Sciatic nerve (tissue), 2 donors: ENCODE measurements at regions of chr20 and their contacts with region 1.

Region 1: GRCh38 chr20:3407771-3408637 is 535 bp upstream of the DNAAF9 start:
- DNase-seq: peak; percentile 84
- ATAC-seq: peak; percentile 86

Region 2: GRCh38 chr20:3470627-3471396 is 62.8 kb after region 1 on chr20 and contains the start of gene ATRN:
- intact Hi-C with region 1: loop called (anchors 2 kb)
- DNase-seq: peak; percentile 95
- ATAC-seq: peak; percentile 97
- total RNA-seq, gene ATRN: 31.5 TPM